Esophagus muscularis mucosa (tissue), 4 donors: ENCODE measurements at regions of chr2 and their contacts with region 1.

Region 1: GRCh38 chr2:200888704-200889625 is at the starts of genes NIF3L1 and PPIL3:
- DNase-seq: peak; percentile 99
- H3K4me3 ChIP-seq: peak within 1 kb of the TSS; percentile 60 to 93 (median 76)
- H3K27ac ChIP-seq: peak within 1 kb of the TSS; percentile 91 to 94 (median 92)
- H3K4me1 ChIP-seq: peaks cover 13 to 41% (median 35%) of the 10 kb centered on the region in 4 donors
- H3K27me3 ChIP-seq: no peaks in the 10 kb centered on the region
- CTCF ChIP-seq: peak in 2 of 3 experiments; percentile 3 to 18
- EP300 ChIP-seq: no peak
- POLR2A ChIP-seq: peak; percentile 7
- total RNA-seq, gene NIF3L1: 11.8 to 21.1 (median 15.5) TPM
- total RNA-seq, gene PPIL3: 6.9 to 16.3 (median 13.4) TPM

Region 2: GRCh38 chr2:199932312-199932855 is 956.6 kb before region 1 on chr2:
- intact Hi-C with region 1: no loop called
- DNase-seq: no peak
- H3K4me3 ChIP-seq: no peak overlapping the region
- H3K27ac ChIP-seq: no peak overlapping the region
- H3K4me1 ChIP-seq: no peaks in the 10 kb centered on the region
- H3K27me3 ChIP-seq: no peaks in the 10 kb centered on the region
- CTCF ChIP-seq: no peak
- EP300 ChIP-seq: no peak
- POLR2A ChIP-seq: no peak

Region 3: GRCh38 chr2:200713003-200713703 is 175.8 kb before region 1 on chr2:
- intact Hi-C with region 1: loop called (anchors 5 kb)
- DNase-seq: peak; percentile 94
- H3K4me3 ChIP-seq: peak overlapping the region; percentile 47 to 58 (median 52)
- H3K27ac ChIP-seq: peak overlapping the region; percentile 53 to 69 (median 62)
- H3K4me1 ChIP-seq: peaks cover 0 to 12% (median 5%) of the 10 kb centered on the region in 4 donors
- H3K27me3 ChIP-seq: no peaks in the 10 kb centered on the region
- CTCF ChIP-seq: peak; percentile 74 to 85 (median 84)
- EP300 ChIP-seq: no peak
- POLR2A ChIP-seq: no peak

Region 4: GRCh38 chr2:200864176-200864976 is 24.6 kb before region 1 on chr2 and contains the start of gene CLK1:
- intact Hi-C with region 1: no loop called
- DNase-seq: peak; percentile 98
- H3K4me3 ChIP-seq: peak within 1 kb of the TSS; percentile 76 to 98 (median 90)
- H3K27ac ChIP-seq: peak within 1 kb of the TSS; percentile 98 to 100 (median 100)
- H3K4me1 ChIP-seq: peaks cover 19 to 58% (median 49%) of the 10 kb centered on the region in 4 donors
- H3K27me3 ChIP-seq: peaks cover 0 to 3% (median 0%) of the 10 kb centered on the region in 4 donors
- CTCF ChIP-seq: no peak
- EP300 ChIP-seq: peak; percentile 14
- POLR2A ChIP-seq: peak; percentile 96
- total RNA-seq, gene CLK1: 94.3 to 177 (median 108) TPM